ENCODE measurements at regions of chr12 and their contacts with region 1.

Region 1: GRCh38 chr12:31749024-31749704 is 20.3 kb upstream of the AMN1 start:
- DNase-seq: peak; percentile 99
- ATAC-seq: peak; percentile 97
- H3K4me3 ChIP-seq: no peak overlapping the region
- H3K27ac ChIP-seq: peak overlapping the region; percentile 95
- H3K4me1 ChIP-seq: peaks cover 51% of the 10 kb centered on the region
- H3K27me3 ChIP-seq: no peaks in the 10 kb centered on the region
- CTCF ChIP-seq: no peak
- EP300 ChIP-seq: peak; percentile 98
- POLR2A ChIP-seq: no peak
- RAD21 ChIP-seq: peak; percentile 26; the same call in 1 of the 2 replicates

Region 2: DNA sequence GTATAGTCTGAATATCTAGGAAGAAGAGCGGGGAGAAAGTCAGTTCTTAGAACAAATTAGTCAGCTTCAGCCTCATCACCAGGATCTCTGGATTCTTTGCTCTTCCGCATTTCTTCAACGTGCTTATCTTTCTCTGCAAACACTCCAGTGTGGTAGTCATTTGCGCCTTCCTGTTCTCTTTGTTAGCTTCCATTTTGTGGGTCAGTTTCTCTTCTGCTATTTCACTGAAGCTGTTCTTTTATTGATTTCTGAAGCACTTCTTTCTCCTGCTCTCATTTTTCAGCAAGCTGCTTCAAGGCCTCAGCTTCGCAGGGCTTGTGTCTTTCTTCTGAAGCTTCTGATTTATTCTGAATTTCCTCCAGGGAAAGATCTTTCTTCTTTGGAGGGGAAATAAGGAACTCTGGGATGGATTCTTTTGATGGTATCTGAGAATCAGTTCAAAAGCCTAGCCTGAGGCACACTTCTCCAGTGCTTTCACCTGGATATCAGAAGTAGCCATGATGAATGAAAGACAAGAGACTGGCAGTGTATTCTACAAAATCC is 33.8 kb before region 1 on chr12:
- CTCF ChIA-PET with region 1: no interaction called
- POLR2A ChIA-PET with region 1: interaction called, 7 read pairs
- in situ Hi-C with region 1: no loop called
- intact Hi-C with region 1: loop called (anchors 5 kb)
- DNase-seq: peak; percentile 76
- ATAC-seq: peak; percentile 85
- H3K4me3 ChIP-seq: peak overlapping the region in 2 of 3 experiments; percentile 13 to 26; a peak in 1 of 6 replicates
- H3K27ac ChIP-seq: peak overlapping the region; percentile 82
- H3K4me1 ChIP-seq: peaks cover 22% of the 10 kb centered on the region
- H3K27me3 ChIP-seq: no peaks in the 10 kb centered on the region
- CTCF ChIP-seq: no peak
- EP300 ChIP-seq: peak in 1 of 2 experiments; percentile 67; a peak in 1 of 4 replicates
- POLR2A ChIP-seq: peak in 1 of 2 experiments; percentile 42; a peak in 1 of 4 replicates
- RAD21 ChIP-seq: no peak

Region 3: DNA sequence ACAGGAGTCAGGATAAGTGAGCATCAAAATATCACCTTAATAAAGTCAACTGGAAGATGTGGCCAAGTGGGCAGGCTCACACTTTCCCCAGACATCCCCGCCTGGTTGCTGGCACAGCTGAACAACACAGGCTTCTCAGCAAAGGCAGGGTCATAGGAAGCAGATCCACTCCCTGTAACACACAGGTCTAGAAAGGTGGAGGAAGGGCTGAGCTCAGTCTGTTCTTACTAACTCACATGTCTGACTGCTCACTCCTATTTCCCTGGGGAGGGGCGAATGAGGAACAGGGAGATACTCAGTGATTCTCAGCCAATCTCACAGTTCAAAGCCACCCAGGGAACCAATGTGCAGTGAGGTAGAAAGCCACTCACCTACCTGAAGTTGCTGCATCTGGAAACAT is 24.7 kb after region 1 on chr12:
- CTCF ChIA-PET with region 1: no interaction called
- POLR2A ChIA-PET with region 1: interaction called, 21 read pairs
- in situ Hi-C with region 1: no loop called
- intact Hi-C with region 1: no loop called
- DNase-seq: peak; percentile 20
- ATAC-seq: peak; percentile 70
- H3K4me3 ChIP-seq: peak overlapping the region in 1 of 3 experiments; percentile 22; a peak in 1 of 6 replicates
- H3K27ac ChIP-seq: peak overlapping the region; percentile 84
- H3K4me1 ChIP-seq: peaks cover 35% of the 10 kb centered on the region
- H3K27me3 ChIP-seq: no peaks in the 10 kb centered on the region
- CTCF ChIP-seq: no peak
- EP300 ChIP-seq: no peak
- POLR2A ChIP-seq: no peak
- RAD21 ChIP-seq: no peak

Region 4: GRCh38 chr12:31804185-31804504 is 55.0 kb after region 1 on chr12:
- CTCF ChIA-PET with region 1: no interaction called
- POLR2A ChIA-PET with region 1: no interaction called
- in situ Hi-C with region 1: no loop called
- intact Hi-C with region 1: no loop called
- DNase-seq: no peak
- ATAC-seq: no peak
- H3K4me3 ChIP-seq: no peak overlapping the region
- H3K27ac ChIP-seq: no peak overlapping the region
- H3K4me1 ChIP-seq: no peaks in the 10 kb centered on the region
- H3K27me3 ChIP-seq: no peaks in the 10 kb centered on the region
- CTCF ChIP-seq: no peak
- EP300 ChIP-seq: no peak
- POLR2A ChIP-seq: no peak
- RAD21 ChIP-seq: no peak

Measured in HepG2 (cell line).